ENCODE measurements at regions of chr20 and their contacts with region 1.

Region 1: DNA sequence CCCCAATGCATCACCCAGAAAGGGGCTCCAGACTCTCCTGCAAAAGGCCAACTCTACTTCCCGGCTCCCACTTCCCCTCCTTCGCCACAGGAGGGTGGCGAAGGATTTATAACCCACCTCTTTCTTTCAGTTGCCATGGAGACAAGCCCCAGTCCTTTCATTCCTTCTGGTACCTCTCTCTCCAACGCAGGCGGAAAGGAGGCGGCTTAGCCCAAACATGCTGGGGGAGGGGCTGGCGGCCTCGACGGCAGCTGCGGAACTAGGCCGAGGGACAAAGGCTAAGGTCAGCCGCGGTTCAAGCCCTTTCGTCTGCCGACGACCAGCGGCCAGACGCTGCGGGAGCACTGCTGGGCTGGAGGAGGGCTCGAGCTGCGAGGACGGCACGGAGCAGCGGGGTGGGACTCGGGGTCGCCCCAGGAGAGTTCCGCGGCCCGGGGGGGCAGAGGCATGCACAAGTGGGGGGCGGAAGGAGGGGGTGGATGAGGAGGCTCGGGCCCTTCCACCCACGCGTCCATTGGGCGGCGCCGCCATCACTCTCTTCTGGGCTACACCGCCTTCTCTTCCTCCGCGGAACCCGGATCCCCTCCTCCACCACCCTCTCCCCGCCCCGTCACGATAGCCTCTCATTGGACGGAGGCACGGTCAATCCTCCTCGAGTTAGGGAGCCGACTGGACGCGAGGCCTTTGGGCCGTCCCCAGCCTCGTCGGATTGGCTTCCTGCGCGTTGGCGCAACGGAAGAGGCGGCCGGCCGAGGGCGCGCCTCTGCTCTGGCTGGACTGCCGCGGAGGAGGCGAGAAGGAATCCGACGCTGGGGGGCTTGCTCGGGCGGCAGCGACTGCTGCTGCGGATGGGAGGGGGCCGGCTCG is at the start of gene PANK2:
- DNase-seq: peak; percentile 96
- ATAC-seq: peak; percentile 97
- H3K4me3 ChIP-seq: peak within 1 kb of the TSS; percentile 86 to 98
- H3K27ac ChIP-seq: peak within 1 kb of the TSS; percentile 98
- H3K4me1 ChIP-seq: peaks cover 28% of the 10 kb centered on the region
- H3K27me3 ChIP-seq: no peaks in the 10 kb centered on the region
- CTCF ChIP-seq: no peak
- total RNA-seq, gene PANK2: 40.9 TPM

Region 2: DNA sequence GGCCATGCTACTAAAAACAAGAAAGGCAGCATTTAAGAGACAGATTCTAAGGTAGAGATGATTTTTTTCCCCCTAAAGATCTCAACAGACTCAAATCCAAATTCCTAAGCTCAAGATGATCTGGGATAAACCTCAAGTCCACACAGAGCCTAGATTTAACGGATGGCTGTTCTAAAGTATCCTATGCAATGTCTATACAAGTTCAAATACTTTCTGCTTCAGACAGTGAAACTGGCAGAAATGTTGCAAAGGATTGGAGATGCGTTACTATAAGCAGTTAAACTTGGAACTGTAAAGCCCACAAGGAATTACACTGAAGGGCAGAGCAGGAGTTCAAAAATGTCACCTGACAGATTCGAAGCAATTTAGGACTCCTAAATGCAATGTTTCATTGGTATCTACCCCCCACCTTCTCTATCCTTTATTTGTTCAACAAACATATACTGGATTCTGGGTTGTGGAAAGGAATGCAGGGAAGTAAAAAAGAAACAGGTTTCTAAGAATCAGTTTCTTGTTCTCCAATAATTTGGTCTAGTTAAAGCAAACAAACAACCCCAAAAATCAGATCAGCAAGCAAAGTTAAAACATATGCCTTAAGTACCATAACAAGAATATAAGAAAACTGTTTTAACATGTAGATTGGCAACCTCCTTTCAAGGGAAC is 483.0 kb before region 1 on chr20:
- CTCF ChIA-PET with region 1: no interaction called
- POLR2A ChIA-PET with region 1: interaction called, 23 read pairs
- in situ Hi-C with region 1: no loop called
- intact Hi-C with region 1: no loop called
- DNase-seq: no peak
- ATAC-seq: no peak
- H3K4me3 ChIP-seq: peak overlapping the region; percentile 85 to 87
- H3K27ac ChIP-seq: 0 out of 2 replicates have a peak overlapping the region, but pooled peaks have one; percentile 19
- H3K4me1 ChIP-seq: peaks cover 12% of the 10 kb centered on the region
- H3K27me3 ChIP-seq: no peaks in the 10 kb centered on the region
- CTCF ChIP-seq: no peak

Region 3: GRCh38 chr20:4089756-4090487 is 201.1 kb after region 1 on chr20:
- CTCF ChIA-PET with region 1: no interaction called
- POLR2A ChIA-PET with region 1: no interaction called
- in situ Hi-C with region 1: no loop called
- intact Hi-C with region 1: loop called (anchors 5 kb)
- DNase-seq: no peak
- ATAC-seq: no peak
- H3K4me3 ChIP-seq: no peak overlapping the region
- H3K27ac ChIP-seq: no peak overlapping the region
- H3K4me1 ChIP-seq: peaks cover 7% of the 10 kb centered on the region
- H3K27me3 ChIP-seq: no peaks in the 10 kb centered on the region
- CTCF ChIP-seq: no peak

Measured in Panc1 (cell line).